Mammary epithelial cell (primary cell): ENCODE measurements at regions of chr9 and their contacts with region 1.

Region 1: GRCh38 chr9:109766336-109766735 is 13.7 kb upstream of the PALM2AKAP2 start:
- DNase-seq: peak; percentile 88
- H3K4me3 ChIP-seq: no peak overlapping the region
- H3K27ac ChIP-seq: no peak overlapping the region
- H3K4me1 ChIP-seq: peaks cover 13% of the 10 kb centered on the region
- H3K27me3 ChIP-seq: no peaks in the 10 kb centered on the region
- CTCF ChIP-seq: no peak

Region 2: DNA sequence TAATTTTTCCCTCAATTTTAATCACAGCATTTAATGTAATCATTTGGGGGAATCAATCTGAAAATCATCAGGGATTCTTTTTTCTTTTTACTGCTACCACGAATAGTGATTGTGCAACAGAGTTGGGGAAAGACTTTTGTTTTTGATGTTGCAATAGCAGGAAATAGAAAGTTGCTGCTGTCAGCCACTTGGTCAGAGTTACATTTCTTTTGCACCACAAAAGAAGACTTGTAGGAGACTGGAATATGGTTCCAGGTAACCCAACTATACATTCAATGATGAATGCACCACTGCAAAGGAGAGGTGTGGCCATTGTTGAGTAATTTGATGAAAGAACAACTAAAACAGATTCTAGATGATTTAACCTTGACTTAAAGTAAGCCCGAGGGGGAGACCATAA is 32.6 kb before region 1 on chr9:
- CTCF ChIA-PET with region 1: no interaction called
- dilution Hi-C with region 1: no loop called
- in situ Hi-C with region 1: no loop called
- intact Hi-C with region 1: loop called (anchors 2 kb)
- DNase-seq: peak; percentile 79
- H3K4me3 ChIP-seq: no peak overlapping the region
- H3K27ac ChIP-seq: no peak overlapping the region
- H3K4me1 ChIP-seq: peaks cover 25% of the 10 kb centered on the region
- H3K27me3 ChIP-seq: no peaks in the 10 kb centered on the region
- CTCF ChIP-seq: no peak

Region 3: GRCh38 chr9:109799792-109800191 is 33.5 kb after region 1 on chr9:
- CTCF ChIA-PET with region 1: no interaction called
- dilution Hi-C with region 1: no loop called
- in situ Hi-C with region 1: no loop called
- intact Hi-C with region 1: no loop called
- DNase-seq: peak; percentile 13
- H3K4me3 ChIP-seq: no peak overlapping the region
- H3K27ac ChIP-seq: no peak overlapping the region
- H3K4me1 ChIP-seq: peaks cover 15% of the 10 kb centered on the region
- H3K27me3 ChIP-seq: no peaks in the 10 kb centered on the region
- CTCF ChIP-seq: no peak

Region 4: DNA sequence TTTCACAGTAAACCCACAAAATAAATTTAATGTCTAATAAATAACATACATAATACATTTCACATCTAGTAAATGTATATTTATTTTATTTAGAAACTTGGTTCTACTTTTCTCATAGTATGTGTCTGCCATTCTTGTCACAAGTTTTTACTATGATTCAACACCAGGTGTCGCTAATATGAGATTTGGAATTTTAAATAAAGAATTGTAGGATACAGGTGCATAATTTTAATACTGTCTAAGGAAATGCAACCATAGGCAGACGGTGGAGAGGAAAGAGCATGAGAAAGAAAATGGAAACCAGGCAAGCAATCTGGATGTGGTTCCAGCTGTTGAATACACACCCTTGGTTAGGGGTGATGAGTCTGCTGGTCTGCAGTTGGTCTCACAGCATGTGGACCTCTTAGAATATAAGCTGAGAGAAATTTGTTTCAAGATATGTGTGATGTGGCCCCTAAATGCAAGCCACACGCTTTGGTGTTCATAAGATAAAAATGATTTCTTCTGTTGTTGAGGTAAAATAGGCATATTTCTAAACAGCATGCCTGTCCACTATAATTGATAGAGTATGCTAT is 686.0 kb after region 1 on chr9:
- CTCF ChIA-PET with region 1: no interaction called
- dilution Hi-C with region 1: no loop called
- in situ Hi-C with region 1: no loop called
- intact Hi-C with region 1: no loop called
- DNase-seq: peak; percentile 4
- H3K4me3 ChIP-seq: no peak overlapping the region
- H3K27ac ChIP-seq: no peak overlapping the region
- H3K4me1 ChIP-seq: no peaks in the 10 kb centered on the region
- H3K27me3 ChIP-seq: no peaks in the 10 kb centered on the region
- CTCF ChIP-seq: peak; percentile 47 to 54